ENCODE measurements at regions of chr11 and their contacts with region 1.

Region 1: GRCh38 chr11:250740-251299 is 14.0 kb downstream of the PSMD13 start:
- DNase-seq: no peak
- ATAC-seq: peak; percentile 94
- H3K4me3 ChIP-seq: no peak overlapping the region
- H3K27ac ChIP-seq: no peak overlapping the region
- H3K4me1 ChIP-seq: no peaks in the 10 kb centered on the region
- H3K27me3 ChIP-seq: no peaks in the 10 kb centered on the region
- CTCF ChIP-seq: peak; percentile 61 to 77 (median 64)
- EP300 ChIP-seq: no peak
- POLR2A ChIP-seq: no peak
- RAD21 ChIP-seq: peak; percentile 63

Region 2: DNA sequence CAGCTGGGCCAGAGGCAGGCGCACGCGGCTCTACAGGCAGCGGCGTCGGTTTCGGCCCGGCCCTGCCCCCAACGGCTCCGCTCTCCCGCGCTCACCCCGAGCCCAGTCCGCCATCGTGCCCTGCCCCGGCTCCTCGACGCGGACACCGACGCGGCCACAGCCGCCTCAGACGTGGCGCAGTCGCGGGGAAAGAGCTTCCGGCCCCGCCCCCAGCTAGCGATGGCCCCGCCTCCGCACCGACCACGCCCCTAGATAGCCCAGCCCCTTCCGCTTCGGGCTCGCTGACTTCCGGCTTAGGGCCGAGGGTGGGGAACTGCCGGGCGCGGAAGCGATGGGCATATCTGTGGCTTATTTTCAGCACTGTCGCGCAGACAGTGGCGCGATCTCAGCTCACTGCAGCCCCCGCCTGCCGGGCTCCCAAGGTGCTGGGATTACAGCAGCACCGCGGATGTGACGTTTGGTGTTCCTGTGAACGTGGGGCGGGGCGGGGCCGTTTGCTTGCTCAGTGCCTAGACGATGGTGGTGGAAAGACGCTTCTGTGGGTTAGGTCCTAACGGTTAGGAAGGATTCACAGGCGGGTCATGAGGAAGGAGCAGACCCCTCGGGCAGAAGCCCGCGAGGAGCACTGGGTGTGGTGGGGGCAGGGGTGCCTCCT is 43.5 kb before region 1 on chr11 and contains the starts of genes BET1L and RIC8A:
- CTCF ChIA-PET with region 1: interaction called, 10 read pairs
- POLR2A ChIA-PET with region 1: interaction called, 3 read pairs
- RAD21 ChIA-PET with region 1: interaction called, 12 read pairs
- SMC1A ChIA-PET with region 1: interaction called, 3 read pairs
- in situ Hi-C with region 1: no loop called
- intact Hi-C with region 1: no loop called
- DNase-seq: peak; percentile 94
- ATAC-seq: peak; percentile 81
- H3K4me3 ChIP-seq: peak within 1 kb of the TSS; percentile 84
- H3K27ac ChIP-seq: peak within 1 kb of the TSS; percentile 97
- H3K4me1 ChIP-seq: peaks cover 27% of the 10 kb centered on the region
- H3K27me3 ChIP-seq: no peaks in the 10 kb centered on the region
- CTCF ChIP-seq: no peak
- EP300 ChIP-seq: no peak; a peak in 1 of 4 replicates
- POLR2A ChIP-seq: peak; percentile 97
- RAD21 ChIP-seq: no peak
- polyA plus RNA-seq, gene BET1L: 6.7 to 12.4 TPM
- polyA plus RNA-seq, gene RIC8A: 10.4 to 12.4 TPM

Region 3: DNA sequence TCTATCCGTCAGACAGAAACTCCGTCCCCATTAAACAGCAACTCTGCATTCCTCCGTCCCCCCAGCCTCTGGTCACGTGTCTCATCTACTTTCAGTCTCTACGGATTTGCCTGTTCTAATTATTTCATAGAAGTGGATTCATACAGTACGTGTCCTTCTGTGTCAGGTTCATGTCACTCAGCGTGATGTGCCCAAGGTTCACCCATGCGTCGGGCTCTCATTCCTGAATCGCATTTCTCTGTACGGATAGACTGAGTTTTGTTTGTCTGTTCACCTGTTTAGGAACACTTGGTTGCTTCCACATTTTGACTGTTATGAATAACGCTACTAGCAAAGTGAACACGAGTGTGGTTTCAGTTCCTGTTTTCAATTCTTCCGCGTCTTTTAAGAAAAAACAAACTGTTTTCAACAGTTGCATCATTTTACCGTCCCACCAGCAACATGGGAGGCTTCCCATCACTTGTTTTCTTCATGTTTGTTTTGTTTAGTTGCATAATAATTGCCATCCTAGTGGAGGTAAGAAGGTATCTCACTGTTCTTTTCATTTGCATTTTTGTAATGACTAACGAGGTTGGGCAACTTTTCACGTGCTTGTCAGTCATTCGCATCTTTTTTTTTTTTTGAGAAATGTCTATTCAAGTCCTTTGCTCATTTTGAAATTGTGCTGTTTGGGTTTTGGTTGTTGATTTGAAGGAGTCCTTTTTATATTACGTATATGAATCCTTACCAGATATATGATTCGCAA is 18.5 kb after region 1 on chr11:
- CTCF ChIA-PET with region 1: interaction called, 37 read pairs
- POLR2A ChIA-PET with region 1: interaction called, 6 read pairs
- RAD21 ChIA-PET with region 1: interaction called, 12 read pairs
- SMC1A ChIA-PET with region 1: interaction called, 8 read pairs
- in situ Hi-C with region 1: no loop called
- intact Hi-C with region 1: no loop called
- DNase-seq: peak; percentile 99
- ATAC-seq: peak; percentile 80
- H3K4me3 ChIP-seq: peak overlapping the region; percentile 78
- H3K27ac ChIP-seq: peak overlapping the region; percentile 88
- H3K4me1 ChIP-seq: peaks cover 14% of the 10 kb centered on the region
- H3K27me3 ChIP-seq: no peaks in the 10 kb centered on the region
- CTCF ChIP-seq: no peak
- EP300 ChIP-seq: peak; percentile 98 to 99
- POLR2A ChIP-seq: no peak; the same call in 1 of the 2 replicates
- RAD21 ChIP-seq: no peak

Region 4: DNA sequence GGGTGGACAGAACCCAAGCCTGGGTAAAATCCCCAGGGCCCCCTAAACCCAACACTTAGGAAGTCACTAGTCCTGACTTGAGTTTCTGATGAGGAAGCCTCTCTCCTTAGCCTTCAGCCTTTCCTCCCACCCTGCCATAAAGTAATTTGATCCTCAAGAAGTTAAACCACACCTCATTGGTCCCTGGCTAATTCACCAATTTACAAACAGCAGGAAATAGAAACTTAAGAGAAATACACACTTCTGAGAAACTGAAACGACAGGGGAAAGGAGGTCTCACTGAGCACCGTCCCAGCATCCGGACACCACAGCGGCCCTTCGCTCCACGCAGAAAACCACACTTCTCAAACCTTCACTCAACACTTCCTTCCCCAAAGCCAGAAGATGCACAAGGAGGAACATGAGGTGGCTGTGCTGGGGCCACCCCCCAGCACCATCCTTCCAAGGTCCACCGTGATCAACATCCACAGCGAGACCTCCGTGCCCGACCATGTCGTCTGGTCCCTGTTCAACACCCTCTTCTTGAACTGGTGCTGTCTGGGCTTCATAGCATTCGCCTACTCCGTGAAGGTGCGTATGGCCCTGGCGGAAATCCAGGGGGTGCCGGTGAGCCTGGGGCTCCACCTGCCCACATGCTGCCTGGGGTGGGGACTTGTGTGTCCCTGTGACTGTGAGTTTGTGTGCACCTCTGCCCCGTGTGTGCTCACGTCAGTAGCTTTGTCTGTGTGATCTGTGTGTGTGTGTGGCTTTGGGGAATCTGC is 63.1 kb after region 1 on chr11 and contains the start of gene IFITM1:
- CTCF ChIA-PET with region 1: interaction called, 9 read pairs
- POLR2A ChIA-PET with region 1: interaction called, 3 read pairs
- RAD21 ChIA-PET with region 1: interaction called, 8 read pairs
- SMC1A ChIA-PET with region 1: interaction called, 10 read pairs
- in situ Hi-C with region 1: no loop called
- intact Hi-C with region 1: no loop called
- DNase-seq: peak; percentile 92
- ATAC-seq: peak; percentile 47
- H3K4me3 ChIP-seq: peak within 1 kb of the TSS; percentile 87
- H3K27ac ChIP-seq: peak within 1 kb of the TSS; percentile 98
- H3K4me1 ChIP-seq: peaks cover 11% of the 10 kb centered on the region
- H3K27me3 ChIP-seq: no peaks in the 10 kb centered on the region; a peak in 1 of 4 replicates
- CTCF ChIP-seq: no peak
- EP300 ChIP-seq: no peak
- POLR2A ChIP-seq: peak; percentile 88
- RAD21 ChIP-seq: no peak
- polyA plus RNA-seq, gene IFITM1: 1,771 to 2,788 TPM

Region 5: GRCh38 chr11:396948-397548 is 146.2 kb after region 1 on chr11:
- CTCF ChIA-PET with region 1: interaction called, 10 read pairs
- POLR2A ChIA-PET with region 1: no interaction called
- RAD21 ChIA-PET with region 1: no interaction called
- SMC1A ChIA-PET with region 1: interaction called, 5 read pairs
- in situ Hi-C with region 1: no loop called
- intact Hi-C with region 1: no loop called
- DNase-seq: no peak
- ATAC-seq: peak; percentile 97
- H3K4me3 ChIP-seq: no peak overlapping the region
- H3K27ac ChIP-seq: no peak overlapping the region
- H3K4me1 ChIP-seq: no peaks in the 10 kb centered on the region
- H3K27me3 ChIP-seq: no peaks in the 10 kb centered on the region
- CTCF ChIP-seq: peak; percentile 18 to 74 (median 62); a peak in 4 of 6 replicates
- EP300 ChIP-seq: no peak
- POLR2A ChIP-seq: no peak
- RAD21 ChIP-seq: no peak